Cardiac septum (tissue), 1 donor: ENCODE measurements at regions of chr22 and their contacts with region 1.

Region 1: GRCh38 chr22:25334162-25334490 is 114.7 kb downstream of the CRYBB2 start:
- DNase-seq: no peak

Region 2: GRCh38 chr22:25202290-25202921 is 131.7 kb before region 1 on chr22:
- intact Hi-C with region 1: loop called (anchors 5 kb)
- DNase-seq: no peak

Region 3: DNA sequence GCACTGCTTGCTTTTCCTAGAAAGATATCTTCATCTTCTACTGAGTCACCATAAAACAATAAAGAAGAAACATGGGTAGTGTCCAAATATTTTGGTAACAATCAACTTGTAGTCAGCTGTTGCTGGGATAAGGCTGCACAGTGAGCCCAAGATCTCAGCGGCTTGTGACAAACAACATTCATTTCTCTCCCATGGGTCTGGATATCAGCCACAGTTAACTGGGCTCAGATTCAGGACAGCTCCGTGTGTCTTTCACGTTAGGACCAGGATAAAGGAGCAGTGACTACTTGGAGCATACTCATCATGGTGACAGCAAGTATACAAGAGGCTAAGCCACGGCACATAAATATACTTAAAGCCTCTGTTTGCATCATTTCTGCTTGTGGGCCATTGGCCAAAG is 202.5 kb after region 1 on chr22:
- intact Hi-C with region 1: no loop called
- DNase-seq: no peak